Naive thymus-derived CD4-positive, alpha-beta T cell (primary cell): ENCODE measurements at regions of chr11 and their contacts with region 1.

Region 1: DNA sequence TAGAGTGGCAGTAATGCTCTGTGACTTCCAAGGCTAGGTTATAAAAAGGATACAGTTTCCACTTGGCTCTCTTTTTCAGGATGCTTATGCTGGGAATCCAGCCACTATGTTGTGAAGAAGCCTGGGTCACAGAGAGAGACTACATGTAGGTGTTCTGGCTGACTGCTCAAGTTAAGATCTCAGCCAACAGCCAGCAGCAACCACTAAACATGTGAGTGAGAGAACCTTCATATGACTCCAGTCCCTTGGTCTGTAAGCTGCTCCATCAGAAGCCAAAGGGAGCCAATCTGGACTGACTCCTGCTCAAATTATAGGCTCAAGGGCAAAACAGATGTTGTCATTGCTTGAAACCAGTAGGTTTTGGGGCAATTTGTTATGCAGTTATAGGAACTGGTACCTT is 162.7 kb downstream of the MAML2 start:
- DNase-seq: no peak
- ATAC-seq: no peak
- H3K4me3 ChIP-seq: no peak overlapping the region
- H3K4me3 Mint-ChIP-seq: peak overlapping the region in 5 of 10 donors; percentile 8 to 62 (median 27)
- H3K27ac ChIP-seq: no peak overlapping the region
- H3K27ac Mint-ChIP-seq: peak overlapping the region in 7 of 9 donors; percentile 56 to 84 (median 70)
- H3K4me1 ChIP-seq: peaks cover 3 to 15% of the 10 kb centered on the region in 2 donors
- H3K4me1 Mint-ChIP-seq: peaks cover 18 to 95% (median 90%) of the 10 kb centered on the region in 7 donors
- H3K27me3 ChIP-seq: no peaks in the 10 kb centered on the region
- H3K27me3 Mint-ChIP-seq: no peaks in the 10 kb centered on the region

Region 2: GRCh38 chr11:96167203-96167758 is 13.1 kb before region 1 on chr11:
- CTCF ChIA-PET with region 1: interaction called, 5 read pairs
- POLR2A ChIA-PET with region 1: interaction called, 5 read pairs
- intact Hi-C with region 1: loop called in 1 of 2 experiments (anchors 2 kb)
- DNase-seq: no peak
- ATAC-seq: no peak
- H3K4me3 ChIP-seq: no peak overlapping the region
- H3K4me3 Mint-ChIP-seq: peak overlapping the region in 8 of 10 donors; percentile 18 to 62 (median 38)
- H3K27ac ChIP-seq: no peak overlapping the region
- H3K27ac Mint-ChIP-seq: peak overlapping the region in 8 of 9 donors; percentile 7 to 85 (median 68)
- H3K4me1 ChIP-seq: peaks cover 0 to 32% of the 10 kb centered on the region in 2 donors
- H3K4me1 Mint-ChIP-seq: peaks cover 32 to 95% (median 89%) of the 10 kb centered on the region in 7 donors
- H3K27me3 ChIP-seq: no peaks in the 10 kb centered on the region
- H3K27me3 Mint-ChIP-seq: no peaks in the 10 kb centered on the region

Region 3: GRCh38 chr11:96197801-96198701 is 17.7 kb after region 1 on chr11:
- CTCF ChIA-PET with region 1: no interaction called
- POLR2A ChIA-PET with region 1: interaction called, 4 read pairs
- intact Hi-C with region 1: loop called in 1 of 2 experiments (anchors 2 kb)
- DNase-seq: no peak
- ATAC-seq: peak; percentile 57
- H3K4me3 ChIP-seq: no peak overlapping the region
- H3K4me3 Mint-ChIP-seq: peak overlapping the region in 5 of 10 donors; percentile 13 to 59 (median 41)
- H3K27ac ChIP-seq: no peak overlapping the region
- H3K27ac Mint-ChIP-seq: peak overlapping the region in 8 of 9 donors; percentile 21 to 82 (median 58)
- H3K4me1 ChIP-seq: peaks cover 25 to 49% of the 10 kb centered on the region in 2 donors
- H3K4me1 Mint-ChIP-seq: peaks cover 45 to 93% (median 87%) of the 10 kb centered on the region in 7 donors
- H3K27me3 ChIP-seq: no peaks in the 10 kb centered on the region
- H3K27me3 Mint-ChIP-seq: no peaks in the 10 kb centered on the region